ENCODE measurements at regions of chr11 and their contacts with region 1.

Region 1: GRCh38 chr11:32893343-32894148 is 935 bp downstream of the QSER1 start:
- DNase-seq: peak; percentile 75
- ATAC-seq: peak; percentile 43

Region 2: DNA sequence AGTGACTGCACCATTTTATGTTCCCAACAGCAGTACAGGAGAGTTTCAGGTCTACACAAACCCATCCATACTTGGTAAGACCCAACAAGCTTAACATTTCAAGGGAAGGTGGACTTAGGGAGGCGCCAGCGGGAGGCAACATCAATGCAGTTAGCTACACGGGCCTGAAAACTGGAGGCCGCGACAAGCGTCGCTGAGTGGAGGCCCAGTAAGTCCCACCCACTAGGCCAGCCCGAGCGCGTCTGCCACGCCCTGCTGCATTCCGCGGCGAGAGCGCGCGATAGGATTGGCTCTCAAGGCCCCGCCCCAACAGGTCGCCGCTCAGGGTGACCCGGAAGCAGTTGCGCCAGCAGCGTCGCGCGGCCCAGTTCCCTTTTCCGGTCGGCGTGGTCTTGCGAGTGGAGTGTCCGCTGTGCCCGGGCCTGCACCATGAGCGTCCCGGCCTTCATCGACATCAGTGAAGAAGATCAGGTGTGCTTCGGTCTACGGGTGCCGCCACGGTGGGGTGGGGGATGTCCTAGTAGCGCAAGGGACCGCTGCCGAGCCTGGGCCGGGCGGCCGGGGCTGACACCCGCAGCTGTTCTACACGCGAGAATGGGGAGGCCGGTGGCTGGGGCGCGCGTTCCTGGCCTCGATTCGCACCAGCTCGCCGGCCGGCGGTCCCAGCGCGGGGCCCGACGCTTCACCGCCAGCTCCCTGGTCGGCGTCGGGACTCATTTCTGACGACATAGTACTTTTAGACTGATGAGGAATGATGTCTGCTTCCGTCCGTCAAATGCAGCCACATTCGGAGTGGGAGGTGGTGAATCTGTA is 309.9 kb before region 1 on chr11 and contains the start of gene EIF3M:
- intact Hi-C with region 1: loop called (anchors 10 kb)
- DNase-seq: peak; percentile 99
- ATAC-seq: peak; percentile 100
- total RNA-seq, gene EIF3M: 185 TPM

Region 3: DNA sequence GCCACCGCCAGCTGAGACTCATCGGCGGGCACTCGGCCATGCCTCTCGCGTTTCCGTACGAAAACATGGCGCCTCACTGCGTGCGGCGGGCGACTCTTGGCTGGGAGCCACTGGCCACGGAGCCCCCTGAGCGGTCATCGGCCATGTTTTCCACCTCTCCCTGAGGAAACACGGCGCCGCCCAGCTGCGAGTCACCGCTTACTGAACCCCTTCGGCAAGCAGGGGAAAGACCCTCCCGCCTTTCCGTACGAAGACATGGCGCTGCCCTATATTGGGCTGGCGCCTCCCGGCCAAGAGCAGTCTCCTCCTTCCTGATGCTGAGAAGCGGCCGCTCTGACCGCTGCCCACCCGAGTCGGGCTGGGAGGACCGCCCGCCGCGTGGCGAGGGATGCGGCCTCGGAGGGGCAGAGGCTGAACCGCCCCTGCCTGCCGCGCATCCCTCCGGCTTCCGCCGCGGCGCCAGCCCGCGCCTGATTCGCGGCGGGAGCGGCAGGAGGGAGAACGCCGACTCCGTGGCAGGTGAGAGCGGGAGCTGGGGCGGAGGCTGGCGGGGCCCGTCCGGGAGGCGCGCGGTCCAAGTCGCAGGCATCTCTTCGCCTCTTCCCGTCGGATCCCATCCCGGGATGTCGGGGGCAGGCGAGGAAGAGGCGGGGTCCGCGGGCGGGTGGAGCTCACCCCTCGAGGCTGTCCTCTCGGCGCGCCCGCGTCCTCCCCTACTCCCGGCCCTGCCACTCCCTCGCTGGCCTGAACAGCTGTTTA is 145.9 kb after region 1 on chr11 and contains the start of gene TCP11L1:
- intact Hi-C with region 1: loop called (anchors 5 kb)
- DNase-seq: peak; percentile 95
- ATAC-seq: peak; percentile 94
- total RNA-seq, gene TCP11L1: 6.4 TPM

Region 4: GRCh38 chr11:33310720-33311500 is 417.4 kb after region 1 on chr11:
- intact Hi-C with region 1: no loop called
- DNase-seq: no peak
- ATAC-seq: no peak